OCI-LY7 (cell line): ENCODE measurements at regions of chr10 and their contacts with region 1.

Region 1: GRCh38 chr10:30433730-30434272 is at the start of gene MAP3K8:
- DNase-seq: peak; percentile 85
- H3K4me3 ChIP-seq: peak within 1 kb of the TSS; percentile 94
- H3K27ac ChIP-seq: peak within 1 kb of the TSS; percentile 51
- H3K4me1 ChIP-seq: peaks cover 51% of the 10 kb centered on the region
- CTCF ChIP-seq: no peak
- total RNA-seq, gene MAP3K8: 5.0 and 10.8 TPM in 2 replicates

Region 2: GRCh38 chr10:30413996-30414576 is 19.7 kb before region 1 on chr10:
- CTCF ChIA-PET with region 1: no interaction called
- POLR2A ChIA-PET with region 1: interaction called, 31 read pairs
- intact Hi-C with region 1: loop called (anchors 1 kb)
- DNase-seq: peak; percentile 79
- H3K4me3 ChIP-seq: no peak overlapping the region
- H3K27ac ChIP-seq: no peak overlapping the region
- H3K4me1 ChIP-seq: peaks cover 24% of the 10 kb centered on the region
- CTCF ChIP-seq: peak; percentile 90

Region 3: GRCh38 chr10:30447125-30447799 is 13.5 kb after region 1 on chr10:
- CTCF ChIA-PET with region 1: interaction called, 3 read pairs
- POLR2A ChIA-PET with region 1: interaction called, 29 read pairs
- intact Hi-C with region 1: no loop called
- DNase-seq: peak; percentile 56
- H3K4me3 ChIP-seq: peak overlapping the region; percentile 26
- H3K27ac ChIP-seq: peak overlapping the region; percentile 66
- H3K4me1 ChIP-seq: peaks cover 37% of the 10 kb centered on the region
- CTCF ChIP-seq: no peak

Region 4: GRCh38 chr10:30488316-30488715 is 54.5 kb after region 1 on chr10:
- CTCF ChIA-PET with region 1: interaction called, 5 read pairs
- POLR2A ChIA-PET with region 1: interaction called, 9 read pairs
- intact Hi-C with region 1: loop called (anchors 2 kb)
- DNase-seq: peak; percentile 66
- H3K4me3 ChIP-seq: peak overlapping the region; percentile 36
- H3K27ac ChIP-seq: peak overlapping the region; percentile 55
- H3K4me1 ChIP-seq: peaks cover 59% of the 10 kb centered on the region
- CTCF ChIP-seq: no peak

Region 5: DNA sequence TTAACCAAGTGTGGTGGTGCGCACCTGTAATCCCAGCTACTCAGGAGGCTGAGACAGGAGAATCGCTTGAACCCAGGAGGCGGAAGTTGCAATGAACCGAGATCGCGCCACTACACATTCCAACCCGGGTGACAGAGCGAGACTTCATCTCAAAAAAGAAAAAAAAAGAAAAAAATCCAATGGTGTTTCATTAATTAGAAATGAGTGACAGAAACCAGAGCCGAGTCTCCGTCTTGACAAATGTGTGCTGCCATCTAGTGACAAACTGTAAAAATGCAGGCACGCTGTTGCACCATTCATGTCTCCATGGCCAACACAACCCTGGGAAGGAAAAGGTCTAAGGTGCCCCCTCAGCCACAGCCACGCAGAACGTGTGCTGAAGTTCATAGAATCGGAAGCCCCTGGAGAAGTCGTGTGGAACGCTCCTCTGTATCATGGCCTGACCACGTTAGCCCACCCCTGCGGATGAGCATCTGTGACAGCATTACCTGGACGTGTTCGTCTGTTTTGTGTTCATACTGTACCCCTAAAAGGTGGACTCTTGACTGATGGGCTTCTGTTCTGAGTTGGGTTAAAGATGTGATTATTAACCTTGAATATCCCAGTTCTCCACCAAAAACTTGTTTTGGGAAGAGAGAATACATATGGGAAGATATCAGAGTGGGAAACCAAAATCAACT is 100.8 kb after region 1 on chr10:
- CTCF ChIA-PET with region 1: interaction called, 4 read pairs
- POLR2A ChIA-PET with region 1: interaction called, 14 read pairs
- intact Hi-C with region 1: loop called (anchors 1 kb)
- DNase-seq: peak; percentile 87
- H3K4me3 ChIP-seq: no peak overlapping the region
- H3K27ac ChIP-seq: no peak overlapping the region
- H3K4me1 ChIP-seq: peaks cover 26% of the 10 kb centered on the region
- CTCF ChIP-seq: peak; percentile 90